Activated CD4-positive, alpha-beta T cell treated with anti-CD3 and anti-CD28 coated beads, Interleukin-2, amount 10 ng/mL, durations not matched to agents 7 days and 5 days (primary cell): ENCODE measurements at regions of chr17 and their contacts with region 1.

Region 1: DNA sequence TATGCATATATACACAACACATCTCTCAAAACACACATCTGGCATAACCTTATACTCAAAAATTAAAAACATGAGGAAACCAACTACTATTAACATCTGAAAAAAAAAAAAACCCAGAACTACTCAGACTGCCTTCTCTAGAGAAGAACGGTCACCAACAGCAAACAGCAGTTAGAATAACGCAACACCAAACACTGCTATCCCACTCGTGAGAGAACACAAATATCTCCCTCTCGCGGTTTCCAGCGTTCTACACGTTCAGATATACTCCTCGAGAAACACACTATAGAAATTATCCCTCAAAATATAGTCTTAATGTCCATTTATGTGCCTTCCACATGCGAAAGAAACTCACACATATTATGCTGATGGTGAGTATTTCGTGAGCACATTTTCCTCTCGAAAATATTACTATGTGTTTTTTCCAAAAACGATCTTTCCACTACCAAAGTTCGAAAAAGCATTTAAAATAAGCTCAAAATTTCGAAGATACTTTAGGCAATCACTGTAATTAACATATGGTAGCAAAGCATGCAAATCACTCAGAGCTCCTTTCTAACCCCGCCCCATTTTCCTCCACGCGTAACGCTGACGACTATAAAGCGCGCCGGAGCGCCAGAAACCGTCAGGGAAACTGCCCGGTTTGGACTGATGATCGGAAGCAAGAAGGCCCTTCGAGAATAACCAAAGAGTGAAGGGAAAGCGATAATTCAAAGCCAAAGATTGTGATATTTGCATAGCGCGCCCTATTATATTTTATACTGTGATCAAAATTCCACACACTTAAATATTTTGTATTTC is 60.1 kb downstream of the TEX14 start:
- DNase-seq: peak; percentile 96
- H3K4me3 Mint-ChIP-seq: no peak overlapping the region
- H3K27ac Mint-ChIP-seq: no peak overlapping the region
- H3K4me1 Mint-ChIP-seq: peaks cover 12% of the 10 kb centered on the region
- H3K27me3 Mint-ChIP-seq: no peaks in the 10 kb centered on the region

Region 2: DNA sequence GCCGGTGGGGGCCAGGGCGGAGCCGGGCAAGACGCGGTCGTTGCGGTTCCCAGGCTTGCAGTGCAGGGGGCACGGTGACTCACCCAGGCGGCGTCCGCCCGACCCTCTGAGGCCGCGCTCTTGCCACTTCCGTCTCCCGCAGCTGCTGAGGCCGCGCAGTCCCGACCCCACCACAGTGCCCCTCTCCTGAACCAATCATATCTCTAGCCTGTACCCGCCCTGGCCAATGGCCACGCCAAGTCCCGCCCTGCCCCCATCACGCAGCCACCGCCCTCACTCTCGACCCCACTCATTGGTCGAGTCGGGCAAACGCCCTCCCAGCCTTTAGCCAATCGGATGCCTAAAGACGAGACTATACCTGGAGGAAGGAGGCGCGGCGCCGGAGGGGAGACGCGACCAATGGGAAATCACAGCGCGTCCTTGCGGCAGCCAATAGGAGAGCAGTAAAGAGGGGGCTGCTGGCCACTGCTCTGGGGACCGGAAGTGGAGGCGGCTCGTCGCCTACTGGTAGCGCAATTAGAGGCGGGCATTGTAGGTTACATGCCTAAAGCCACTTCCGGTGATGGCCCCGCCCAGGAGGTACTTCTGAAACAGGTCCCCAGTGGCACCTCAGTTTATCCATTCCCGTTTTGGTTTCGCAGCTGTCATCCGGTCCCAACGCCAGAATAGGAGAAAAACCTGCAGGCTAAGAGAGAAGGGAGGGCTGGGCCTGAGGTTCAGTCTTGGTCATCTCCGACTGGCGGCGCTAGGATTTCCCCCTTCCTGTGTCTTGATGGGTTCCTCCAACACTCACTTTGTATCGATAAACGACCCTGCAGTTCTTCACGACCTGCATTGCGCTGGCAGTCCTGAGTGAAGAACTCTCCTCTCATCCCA is 113.8 kb before region 1 on chr17:
- CTCF ChIA-PET with region 1: interaction called, 6 read pairs
- POLR2A ChIA-PET with region 1: interaction called, 33 read pairs
- DNase-seq: peak; percentile 100
- H3K4me3 Mint-ChIP-seq: peak overlapping the region; percentile 86
- H3K27ac Mint-ChIP-seq: peak overlapping the region; percentile 93
- H3K4me1 Mint-ChIP-seq: peaks cover 46% of the 10 kb centered on the region
- H3K27me3 Mint-ChIP-seq: no peaks in the 10 kb centered on the region

Region 3: DNA sequence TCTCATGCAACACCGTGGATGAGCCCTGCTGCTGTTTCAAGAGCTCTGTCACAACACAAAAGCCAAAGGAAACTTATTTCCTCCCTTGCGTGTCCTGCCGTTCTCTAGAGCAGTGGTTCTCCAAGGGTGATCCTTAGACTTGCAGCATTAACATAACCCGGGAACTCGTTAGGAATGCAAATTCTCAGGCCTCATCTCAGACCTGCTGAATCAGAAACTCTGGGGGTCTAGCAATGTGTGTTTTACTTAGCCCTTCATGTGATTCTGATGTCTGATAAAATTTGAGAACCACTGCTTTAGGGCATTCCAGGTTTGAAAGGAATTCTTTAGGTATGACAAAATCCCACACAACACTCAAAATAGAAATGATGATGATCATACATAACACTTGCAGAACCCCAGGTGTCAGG is 65.9 kb before region 1 on chr17:
- CTCF ChIA-PET with region 1: no interaction called
- POLR2A ChIA-PET with region 1: no interaction called
- DNase-seq: no peak
- H3K4me3 Mint-ChIP-seq: no peak overlapping the region
- H3K27ac Mint-ChIP-seq: no peak overlapping the region
- H3K4me1 Mint-ChIP-seq: peaks cover 2% of the 10 kb centered on the region
- H3K27me3 Mint-ChIP-seq: peaks cover 15% of the 10 kb centered on the region

Region 4: DNA sequence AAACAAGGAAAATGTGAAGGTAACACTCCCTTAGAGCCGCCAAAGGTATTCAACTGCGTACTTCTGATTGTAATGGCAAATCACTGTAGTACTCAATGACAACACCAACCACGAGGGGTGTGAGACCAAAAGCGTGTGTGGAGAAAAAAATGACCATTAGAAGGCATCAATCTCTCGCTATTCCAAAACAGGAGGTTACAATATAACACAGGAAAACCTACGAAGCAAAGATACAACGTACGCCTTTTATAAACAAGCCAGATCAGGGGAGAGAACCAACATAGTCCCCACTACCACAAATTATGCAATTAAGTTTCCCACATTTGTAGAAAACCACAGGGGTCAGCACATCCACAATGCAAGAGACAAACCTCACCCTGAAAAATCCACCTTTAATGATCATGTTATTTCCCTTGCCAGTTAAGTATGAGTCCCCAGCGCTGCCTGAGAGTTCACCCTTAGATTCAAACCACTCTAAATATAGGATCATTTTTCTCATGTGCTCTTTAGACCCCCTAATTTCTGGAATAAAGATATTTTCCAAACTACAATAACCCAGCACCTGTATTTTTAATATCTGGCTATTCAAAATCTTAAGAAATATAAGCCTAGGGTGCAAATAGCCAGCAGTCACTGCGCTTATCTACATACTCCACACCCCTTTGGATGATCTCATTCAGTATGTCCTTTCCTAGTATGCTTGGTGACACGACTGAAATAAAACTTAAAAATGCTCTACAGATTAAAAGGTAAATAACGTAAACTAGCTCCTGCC is 47.7 kb after region 1 on chr17:
- CTCF ChIA-PET with region 1: no interaction called
- POLR2A ChIA-PET with region 1: no interaction called
- DNase-seq: no peak
- H3K4me3 Mint-ChIP-seq: no peak overlapping the region
- H3K27ac Mint-ChIP-seq: no peak overlapping the region
- H3K4me1 Mint-ChIP-seq: no peaks in the 10 kb centered on the region
- H3K27me3 Mint-ChIP-seq: peaks cover 6% of the 10 kb centered on the region

Region 5: DNA sequence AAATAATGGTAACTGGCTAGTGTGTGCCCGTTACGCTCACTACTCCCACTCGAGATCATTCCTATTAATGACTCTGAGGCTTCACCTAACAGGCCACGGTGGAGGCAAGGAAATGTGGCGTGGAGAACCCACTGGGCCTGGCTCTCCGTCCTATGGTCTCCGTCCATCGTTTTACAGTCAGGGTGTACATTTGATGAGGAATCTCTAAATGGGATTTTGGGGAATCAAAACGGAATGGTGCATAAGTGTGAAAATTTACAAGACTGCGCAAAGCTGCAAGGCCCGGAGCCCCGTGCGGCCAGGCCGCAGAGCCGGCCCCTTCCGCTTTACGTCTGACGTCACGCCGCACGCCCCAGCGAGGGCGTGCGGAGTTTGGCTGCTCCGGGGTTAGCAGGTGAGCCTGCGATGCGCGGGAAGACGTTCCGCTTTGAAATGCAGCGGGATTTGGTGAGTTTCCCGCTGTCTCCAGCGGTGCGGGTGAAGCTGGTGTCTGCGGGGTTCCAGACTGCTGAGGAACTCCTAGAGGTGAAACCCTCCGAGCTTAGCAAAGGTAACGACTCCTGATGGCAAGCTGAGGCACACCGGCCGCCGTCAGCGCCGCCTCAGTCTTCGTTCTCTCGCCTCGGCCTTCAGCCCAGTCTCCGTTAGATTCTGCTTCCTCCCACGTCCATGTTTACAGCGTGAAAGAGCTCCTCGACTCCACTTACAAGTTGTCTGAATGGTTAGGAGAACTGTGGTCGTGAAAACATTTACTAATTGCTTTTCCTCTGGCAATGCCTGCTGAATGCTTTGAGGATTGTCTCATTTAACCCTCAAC is 60.7 kb after region 1 on chr17 and contains the start of gene RAD51C:
- CTCF ChIA-PET with region 1: no interaction called
- POLR2A ChIA-PET with region 1: interaction called, 19 read pairs
- DNase-seq: peak; percentile 93
- H3K4me3 Mint-ChIP-seq: peak within 1 kb of the TSS; percentile 92
- H3K27ac Mint-ChIP-seq: peak within 1 kb of the TSS; percentile 95
- H3K4me1 Mint-ChIP-seq: peaks cover 40% of the 10 kb centered on the region
- H3K27me3 Mint-ChIP-seq: no peaks in the 10 kb centered on the region
- total RNA-seq, gene RAD51C: 62.7 to 65.8 TPM